ENCODE measurements at regions of chr12 and their contacts with region 1.

Region 1: GRCh38 chr12:101939856-101940265 is 62.5 kb downstream of the DRAM1 start:
- DNase-seq: peak; percentile 43 to 55
- ATAC-seq: peak; percentile 61 to 62
- H3K4me3 ChIP-seq: no peak overlapping the region
- H3K27ac ChIP-seq: peak overlapping the region; percentile 1 to 71 (median 40)
- H3K4me1 ChIP-seq: peaks cover 14 to 17% of the 10 kb centered on the region in 2 donors
- H3K27me3 ChIP-seq: no peaks in the 10 kb centered on the region
- CTCF ChIP-seq: peak; percentile 49 to 71 (median 55)
- POLR2A ChIP-seq: no peak

Region 2: DNA sequence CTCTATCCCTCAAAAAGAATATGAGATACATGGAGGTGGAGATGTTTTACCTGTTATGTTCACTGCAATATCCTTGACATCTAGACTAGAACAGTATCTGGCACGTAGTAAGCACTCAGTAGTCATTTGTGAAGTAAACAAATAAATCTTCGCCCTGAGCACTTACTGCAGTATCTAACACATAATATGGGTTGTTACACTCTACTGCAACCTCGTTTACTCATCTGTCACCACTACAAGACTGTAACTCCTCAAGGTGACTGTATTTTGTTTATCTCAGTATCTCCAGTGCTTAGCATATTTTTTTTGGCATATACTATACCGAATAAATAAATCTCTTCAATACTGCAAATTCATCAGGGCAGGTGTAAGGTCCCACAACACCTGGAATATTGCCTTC is 55.8 kb after region 1 on chr12:
- in situ Hi-C with region 1: no loop called
- intact Hi-C with region 1: loop called (anchors 2 kb)
- DNase-seq: no peak
- ATAC-seq: peak in 1 of 2 donors; percentile 51
- H3K4me3 ChIP-seq: no peak overlapping the region
- H3K27ac ChIP-seq: peak overlapping the region in 1 of 4 donors; percentile 65
- H3K4me1 ChIP-seq: peaks cover 4 to 7% of the 10 kb centered on the region in 2 donors
- H3K27me3 ChIP-seq: no peaks in the 10 kb centered on the region
- CTCF ChIP-seq: no peak
- POLR2A ChIP-seq: no peak

Region 3: DNA sequence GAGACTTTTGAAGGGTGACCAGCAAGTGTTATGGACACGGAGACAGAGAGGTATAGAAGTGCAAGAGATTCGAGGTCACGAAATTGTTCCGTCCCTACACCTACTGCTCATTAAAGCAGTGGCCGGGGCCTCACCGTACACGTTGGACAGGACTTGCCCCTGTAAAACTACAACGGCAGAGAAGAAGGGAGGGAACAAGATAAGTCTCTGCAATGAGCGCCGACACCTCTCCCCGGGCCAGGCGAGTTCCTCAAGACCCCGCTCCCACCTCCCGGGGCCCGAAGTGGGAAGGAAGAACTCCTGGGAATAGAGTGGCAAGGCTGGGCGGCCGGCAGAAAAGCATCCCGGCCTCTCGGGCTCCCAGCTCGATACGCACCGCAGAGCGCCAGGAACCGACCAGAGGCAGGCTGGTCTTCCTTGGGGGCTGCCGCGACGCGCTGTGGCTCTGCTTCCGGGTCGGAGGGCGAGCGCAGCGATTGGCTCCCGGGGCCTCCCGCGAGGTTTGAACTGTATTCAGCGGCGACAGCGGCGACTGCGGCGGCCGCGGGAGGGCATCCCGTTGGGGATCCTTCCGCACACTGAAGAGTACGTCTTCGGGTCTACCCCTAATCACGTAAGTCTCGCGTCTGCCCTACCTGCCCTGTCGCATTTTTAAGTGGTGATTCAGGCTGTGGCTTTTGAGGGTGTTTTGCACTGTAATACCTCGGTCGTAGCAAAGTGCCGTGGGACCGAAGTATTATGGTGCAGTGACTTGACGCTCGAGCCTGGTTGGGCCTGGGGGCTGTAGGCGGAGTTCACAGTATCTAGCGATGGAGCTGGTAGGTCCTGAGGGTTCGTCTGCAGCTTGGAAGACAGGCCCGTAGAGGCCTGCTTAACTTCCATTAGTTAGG is 180.1 kb after region 1 on chr12 and contains the starts of genes NUP37 and PARPBP:
- in situ Hi-C with region 1: no loop called
- intact Hi-C with region 1: loop called (anchors 2 kb)
- DNase-seq: peak; percentile 78 to 81
- ATAC-seq: peak; percentile 96 to 97
- H3K4me3 ChIP-seq: peak within 1 kb of the TSS; percentile 74 to 98 (median 90)
- H3K27ac ChIP-seq: peak within 1 kb of the TSS; percentile 85 to 91 (median 88)
- H3K4me1 ChIP-seq: peaks cover 7 to 16% of the 10 kb centered on the region in 2 donors
- H3K27me3 ChIP-seq: no peaks in the 10 kb centered on the region
- CTCF ChIP-seq: peak in 1 of 5 experiments; percentile 35
- POLR2A ChIP-seq: peak; percentile 45 to 55
- total RNA-seq, gene NUP37: 11.6 to 26.6 (median 19.2) TPM
- total RNA-seq, gene PARPBP: 0.31 to 3.1 (median 0.89) TPM

Region 4: DNA sequence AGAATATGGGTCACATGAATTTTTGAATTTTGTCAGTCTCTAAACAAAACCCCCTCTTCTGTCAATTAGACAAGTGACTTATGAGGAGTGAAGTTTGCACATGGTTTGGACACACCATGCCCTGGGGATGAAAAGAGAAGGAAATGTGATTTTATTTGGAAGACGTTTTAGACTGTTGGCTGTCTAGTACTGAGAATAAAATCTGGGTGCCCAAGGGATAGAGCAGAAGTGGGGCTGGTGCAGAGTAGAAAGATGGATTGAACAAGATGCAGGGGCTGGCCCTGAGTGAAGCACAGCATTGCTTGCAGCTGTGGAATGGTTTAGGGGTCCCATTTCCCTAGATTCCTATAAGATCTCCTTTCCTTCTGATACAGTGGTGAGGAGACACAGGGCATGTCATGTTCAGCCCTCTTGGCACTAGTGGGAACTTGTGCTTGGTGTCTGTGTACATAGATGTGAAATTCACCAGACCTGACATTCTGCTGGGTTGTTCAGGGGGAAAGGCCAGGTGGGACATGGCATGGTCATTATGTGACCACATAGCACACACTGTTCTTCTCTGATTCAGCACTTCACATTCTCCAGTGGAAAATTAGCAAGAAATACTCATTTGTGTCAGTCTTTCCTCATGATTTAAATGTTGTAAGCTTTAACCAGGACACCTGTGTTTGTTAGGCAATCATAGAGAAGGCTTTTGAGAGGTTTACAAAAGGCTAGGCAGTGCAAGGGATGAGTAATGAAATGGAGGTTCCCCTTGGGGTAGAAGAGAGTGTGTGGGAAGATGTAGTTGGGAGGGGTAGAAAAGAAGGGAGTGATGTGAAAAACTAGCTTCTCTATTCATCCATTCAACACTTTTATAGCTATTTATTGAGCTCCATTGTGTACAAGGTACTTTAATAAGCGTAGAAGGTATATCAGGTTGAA is 742.8 kb after region 1 on chr12:
- in situ Hi-C with region 1: no loop called
- intact Hi-C with region 1: loop called (anchors 10 kb)
- DNase-seq: peak in 1 of 2 donors; percentile 49
- ATAC-seq: peak; percentile 72 to 80
- H3K4me3 ChIP-seq: no peak overlapping the region
- H3K27ac ChIP-seq: peak overlapping the region in 2 of 4 donors; percentile 37 to 43
- H3K4me1 ChIP-seq: no peaks in the 10 kb centered on the region
- H3K27me3 ChIP-seq: no peaks in the 10 kb centered on the region
- CTCF ChIP-seq: no peak
- POLR2A ChIP-seq: no peak

Region 5: GRCh38 chr12:102769319-102769916 is 829.6 kb after region 1 on chr12:
- in situ Hi-C with region 1: loop called in 2 of 4 experiments (anchors 25 kb)
- intact Hi-C with region 1: loop called (anchors 1 kb)
- DNase-seq: peak; percentile 16 to 51
- ATAC-seq: peak; percentile 53 to 84
- H3K4me3 ChIP-seq: no peak overlapping the region
- H3K27ac ChIP-seq: no peak overlapping the region
- H3K4me1 ChIP-seq: peaks cover 4 to 8% of the 10 kb centered on the region in 2 donors
- H3K27me3 ChIP-seq: no peaks in the 10 kb centered on the region
- CTCF ChIP-seq: peak in 4 of 5 experiments; percentile 45 to 57 (median 46)
- POLR2A ChIP-seq: no peak